ENCODE measurements at regions of chr14 and their contacts with region 1.

Region 1: GRCh38 chr14:52961060-52961639 is 10.3 kb upstream of the FERMT2 start:
- DNase-seq: peak; percentile 25 to 65
- ATAC-seq: peak; percentile 84 to 95 (median 94)
- H3K4me3 ChIP-seq: no peak overlapping the region
- H3K27ac ChIP-seq: peak overlapping the region in 9 of 10 donors; percentile 11 to 76 (median 55)
- H3K4me1 ChIP-seq: peaks cover 3 to 21% (median 10%) of the 10 kb centered on the region in 9 donors
- H3K27me3 ChIP-seq: no peaks in the 10 kb centered on the region
- CTCF ChIP-seq: peak; percentile 55 to 77 (median 71)

Region 2: DNA sequence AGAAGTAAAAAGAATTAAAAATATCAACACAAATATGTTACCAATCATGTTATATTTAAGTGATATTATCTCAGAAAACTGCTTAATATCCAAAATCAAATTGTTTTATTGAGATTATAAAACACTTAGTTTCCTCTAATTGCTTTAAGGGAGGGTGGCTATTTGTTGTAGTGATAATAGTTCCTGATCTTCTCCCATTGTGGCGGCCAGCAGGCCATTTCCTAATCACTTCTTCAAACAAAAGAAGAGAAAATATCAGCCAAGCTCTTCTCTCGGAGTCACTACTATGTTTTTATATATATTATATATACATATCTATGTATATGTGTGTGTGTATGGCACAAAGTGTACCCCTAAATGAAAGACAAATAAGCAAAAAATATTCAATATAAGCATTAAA is 297.3 kb before region 1 on chr14:
- intact Hi-C with region 1: no loop called
- DNase-seq: no peak
- ATAC-seq: no peak
- H3K4me3 ChIP-seq: no peak overlapping the region
- H3K27ac ChIP-seq: no peak overlapping the region
- H3K4me1 ChIP-seq: no peaks in the 10 kb centered on the region
- H3K27me3 ChIP-seq: no peaks in the 10 kb centered on the region
- CTCF ChIP-seq: no peak

Region 3: GRCh38 chr14:52824507-52824906 is 136.6 kb before region 1 on chr14:
- intact Hi-C with region 1: loop called (anchors 1 to 5 kb)
- DNase-seq: no peak
- ATAC-seq: no peak
- H3K4me3 ChIP-seq: no peak overlapping the region
- H3K27ac ChIP-seq: no peak overlapping the region
- H3K4me1 ChIP-seq: peaks cover 0 to 9% (median 0%) of the 10 kb centered on the region in 9 donors
- H3K27me3 ChIP-seq: no peaks in the 10 kb centered on the region
- CTCF ChIP-seq: no peak

Region 4: DNA sequence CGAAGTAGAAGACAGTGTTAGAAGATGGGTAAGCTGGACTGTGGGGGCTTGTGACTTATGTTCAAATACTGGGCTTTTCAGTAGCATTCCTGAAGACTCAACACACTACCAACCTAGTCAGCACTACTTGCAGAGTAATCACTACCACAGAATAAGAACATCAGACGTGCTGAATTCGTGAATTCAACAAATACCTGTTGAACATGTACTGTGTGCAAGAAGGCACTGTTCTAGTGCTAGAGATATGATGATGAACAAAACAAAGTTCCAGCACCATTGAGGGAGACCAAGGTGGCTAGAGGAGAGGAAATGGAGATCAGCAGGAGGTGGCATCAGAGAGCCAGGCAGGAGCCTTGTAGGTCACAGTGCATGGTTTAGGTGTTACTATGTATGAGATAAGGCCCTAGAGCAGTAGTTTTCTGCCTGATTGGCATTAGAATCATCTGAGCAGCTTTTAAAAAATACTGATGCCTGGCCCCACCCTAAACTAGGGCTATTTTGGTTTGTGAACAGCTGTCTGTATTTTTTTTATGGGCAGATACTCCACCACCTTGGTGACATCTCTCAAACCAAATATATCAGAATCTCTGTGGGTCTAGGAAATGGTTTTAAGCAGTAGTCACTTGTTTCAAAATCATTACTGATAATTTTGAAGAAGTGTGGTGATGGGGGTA is 37.1 kb before region 1 on chr14:
- intact Hi-C with region 1: no loop called
- DNase-seq: no peak
- ATAC-seq: peak in 6 of 8 donors; percentile 40 to 72 (median 60)
- H3K4me3 ChIP-seq: no peak overlapping the region
- H3K27ac ChIP-seq: peak overlapping the region in 2 of 10 donors; percentile 20 to 23
- H3K4me1 ChIP-seq: peaks cover 11 to 98% (median 88%) of the 10 kb centered on the region in 9 donors
- H3K27me3 ChIP-seq: no peaks in the 10 kb centered on the region
- CTCF ChIP-seq: peak in 3 of 9 donors; percentile 44 to 48 (median 47)

Region 5: DNA sequence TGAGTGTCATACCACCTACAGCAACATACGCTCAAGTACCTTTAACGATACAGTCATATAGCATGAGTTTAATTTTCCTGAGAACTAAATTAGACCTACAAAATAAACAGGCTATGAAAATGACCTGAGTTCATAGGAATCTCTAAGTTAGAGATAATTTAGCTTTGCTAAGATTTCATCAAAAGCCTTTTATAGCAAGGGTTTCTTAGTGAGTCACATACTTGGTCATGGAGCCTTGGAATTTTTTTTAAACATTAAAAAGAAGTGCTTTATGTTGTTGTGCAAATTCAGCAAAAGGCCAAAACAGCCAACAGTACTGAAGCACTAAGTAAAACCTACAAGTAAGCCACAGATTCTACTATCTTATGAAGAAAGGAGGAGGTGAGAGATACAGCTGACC is 83.3 kb after region 1 on chr14:
- intact Hi-C with region 1: loop called in 2 of 10 experiments (anchors 10 kb)
- DNase-seq: no peak
- ATAC-seq: no peak
- H3K4me3 ChIP-seq: no peak overlapping the region
- H3K27ac ChIP-seq: peak overlapping the region in 1 of 10 donors; percentile 41
- H3K4me1 ChIP-seq: peaks cover 0 to 43% (median 31%) of the 10 kb centered on the region in 9 donors
- H3K27me3 ChIP-seq: no peaks in the 10 kb centered on the region
- CTCF ChIP-seq: no peak

Region 6: DNA sequence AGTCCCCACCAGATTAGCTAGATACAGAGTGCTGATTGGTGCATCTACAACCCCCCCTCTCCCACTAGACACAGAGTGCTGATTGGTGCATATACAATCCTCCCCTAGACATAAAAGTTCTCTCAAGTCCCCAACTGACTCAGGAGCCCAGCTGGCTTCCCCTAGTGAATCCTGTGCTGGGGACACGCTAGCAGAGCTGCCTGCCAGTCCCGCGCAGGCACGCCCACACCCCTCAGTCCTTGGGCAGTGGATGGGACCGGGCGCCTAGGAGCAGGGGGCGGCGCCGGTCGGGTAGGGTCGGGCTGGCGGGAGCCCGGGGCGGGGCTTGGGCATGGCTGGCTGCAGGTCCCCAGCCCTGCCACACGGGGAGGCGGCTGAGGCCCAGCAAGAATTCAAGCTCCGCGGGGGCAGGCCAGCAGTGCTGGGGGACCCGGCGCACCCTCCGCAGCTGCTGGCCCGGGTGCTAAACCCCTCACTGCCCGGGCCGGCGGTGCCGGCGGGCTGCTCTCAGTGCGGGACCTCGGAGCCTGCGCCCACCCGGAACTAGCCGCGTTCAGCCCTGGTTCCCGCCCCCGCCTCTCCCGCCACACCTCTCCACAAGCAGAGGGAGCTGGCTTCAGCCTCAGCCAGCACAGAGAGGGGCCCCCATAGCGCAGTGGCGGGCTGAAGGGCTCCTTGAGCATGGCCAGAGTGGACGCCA is 256.3 kb after region 1 on chr14:
- intact Hi-C with region 1: no loop called
- DNase-seq: peak; percentile 56 to 73
- ATAC-seq: peak; percentile 93 to 99 (median 97)
- H3K4me3 ChIP-seq: peak overlapping the region; percentile 43 to 77 (median 68)
- H3K27ac ChIP-seq: peak overlapping the region in 7 of 10 donors; percentile 15 to 80 (median 67)
- H3K4me1 ChIP-seq: peaks cover 0 to 10% (median 4%) of the 10 kb centered on the region in 9 donors
- H3K27me3 ChIP-seq: no peaks in the 10 kb centered on the region
- CTCF ChIP-seq: peak; percentile 40 to 71 (median 62)

Region 7: GRCh38 chr14:53306267-53306721 is 345.1 kb after region 1 on chr14:
- intact Hi-C with region 1: loop called in 2 of 10 experiments (anchors 10 kb)
- DNase-seq: peak; percentile 44 to 67
- ATAC-seq: peak in 7 of 8 donors; percentile 70 to 87 (median 85)
- H3K4me3 ChIP-seq: peak overlapping the region in 9 of 10 donors; percentile 25 to 56 (median 42)
- H3K27ac ChIP-seq: peak overlapping the region in 8 of 10 donors; percentile 35 to 64 (median 40)
- H3K4me1 ChIP-seq: peaks cover 0 to 25% (median 5%) of the 10 kb centered on the region in 9 donors
- H3K27me3 ChIP-seq: no peaks in the 10 kb centered on the region
- CTCF ChIP-seq: peak; percentile 51 to 90 (median 82)

Measured in heart right ventricle (tissue), 16 donors.